ENCODE measurements at regions of chr7 and their contacts with region 1.

Region 1: DNA sequence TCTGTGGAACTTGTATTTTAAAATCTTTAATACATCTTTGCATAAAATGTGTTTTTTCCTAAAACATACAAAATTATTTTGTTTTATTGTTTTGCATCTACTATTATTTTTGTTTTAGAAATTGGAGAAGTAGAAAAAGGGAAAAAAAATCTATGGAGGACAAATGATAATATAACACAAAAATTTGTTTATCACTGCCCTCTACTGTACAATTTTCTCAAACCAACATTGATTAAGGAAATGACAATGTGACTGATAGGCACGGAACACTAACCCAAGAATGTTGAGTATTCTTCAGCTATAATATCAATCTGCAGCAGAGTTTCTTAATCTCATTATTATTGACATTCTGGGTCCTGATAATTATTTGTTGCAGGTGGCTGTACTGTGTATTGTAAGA is 9.5 kb upstream of the ING3 start:
- DNase-seq: no peak
- H3K4me3 ChIP-seq: no peak overlapping the region
- H3K27ac ChIP-seq: peak overlapping the region in 1 of 3 donors; percentile 8
- H3K4me1 ChIP-seq: peaks cover 0 to 4% of the 10 kb centered on the region in 2 donors
- H3K27me3 ChIP-seq: no peaks in the 10 kb centered on the region
- CTCF ChIP-seq: peak in 4 of 6 experiments; percentile 9 to 68 (median 52)
- POLR2A ChIP-seq: no peak

Region 2: DNA sequence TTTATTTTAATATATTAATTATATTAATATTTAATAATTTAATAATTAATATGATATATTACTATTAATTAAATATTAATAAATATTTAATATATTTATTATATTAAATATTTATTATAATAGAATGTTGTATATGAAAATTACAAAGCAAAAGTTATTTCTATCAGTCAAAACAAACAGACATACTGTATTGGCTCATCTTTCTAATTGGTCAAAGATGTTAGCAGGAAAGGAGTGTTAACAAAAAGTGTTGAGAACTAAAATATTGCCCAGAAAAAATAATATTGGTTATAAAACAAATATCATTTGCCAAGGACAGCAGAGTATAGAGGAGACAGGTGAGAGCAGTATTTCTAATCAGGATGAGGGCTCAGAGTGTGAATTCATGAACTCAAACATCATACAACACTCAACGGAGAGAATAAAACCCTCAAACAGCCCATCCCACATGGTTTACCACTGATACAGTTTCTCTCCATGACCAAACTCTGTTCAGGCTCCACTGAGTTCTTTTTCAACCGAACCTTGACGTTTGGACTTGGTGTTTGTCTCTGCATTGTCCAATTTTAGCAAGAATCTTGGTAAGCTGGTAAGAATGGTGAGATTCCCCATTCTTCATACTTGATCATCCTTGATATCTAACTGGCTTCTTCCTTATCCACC is 141.1 kb before region 1 on chr7:
- intact Hi-C with region 1: loop called (anchors 5 kb)
- DNase-seq: no peak
- H3K4me3 ChIP-seq: no peak overlapping the region
- H3K27ac ChIP-seq: no peak overlapping the region
- H3K4me1 ChIP-seq: peaks cover 8 to 13% of the 10 kb centered on the region in 2 donors
- H3K27me3 ChIP-seq: no peaks in the 10 kb centered on the region
- CTCF ChIP-seq: no peak
- POLR2A ChIP-seq: no peak

Region 3: GRCh38 chr7:120857588-120858573 is 83.2 kb before region 1 on chr7 and contains the start of gene TSPAN12:
- intact Hi-C with region 1: loop called (anchors 10 kb)
- DNase-seq: peak; percentile 92 to 94
- H3K4me3 ChIP-seq: peak within 1 kb of the TSS; percentile 72 to 88 (median 79)
- H3K27ac ChIP-seq: peak within 1 kb of the TSS; percentile 93 to 97 (median 96)
- H3K4me1 ChIP-seq: peaks cover 12 to 17% of the 10 kb centered on the region in 2 donors
- H3K27me3 ChIP-seq: no peaks in the 10 kb centered on the region
- CTCF ChIP-seq: peak; percentile 32 to 91 (median 72)
- POLR2A ChIP-seq: peak in 1 of 2 donors; percentile 75
- total RNA-seq, gene TSPAN12: 36.2 to 55.1 (median 48.8) TPM